Heart right ventricle (tissue), 16 donors: ENCODE measurements at regions of chr17 and their contacts with region 1.

Region 1: GRCh38 chr17:79769596-79770520 is 8.1 kb upstream of the CBX2 start:
- DNase-seq: no peak
- ATAC-seq: no peak
- H3K4me3 ChIP-seq: no peak overlapping the region
- H3K27ac ChIP-seq: no peak overlapping the region
- H3K4me1 ChIP-seq: no peaks in the 10 kb centered on the region
- H3K27me3 ChIP-seq: peaks cover 0 to 56% (median 34%) of the 10 kb centered on the region in 7 donors
- CTCF ChIP-seq: no peak

Region 2: GRCh38 chr17:79808763-79809529 is 39.1 kb after region 1 on chr17:
- intact Hi-C with region 1: no loop called
- DNase-seq: no peak
- ATAC-seq: peak in 6 of 8 donors; percentile 12 to 63 (median 46)
- H3K4me3 ChIP-seq: no peak overlapping the region
- H3K27ac ChIP-seq: no peak overlapping the region
- H3K4me1 ChIP-seq: peaks cover 19 to 53% (median 36%) of the 10 kb centered on the region in 9 donors
- H3K27me3 ChIP-seq: peaks cover 61 to 96% (median 93%) of the 10 kb centered on the region in 7 donors
- CTCF ChIP-seq: peak in 8 of 9 donors; percentile 8 to 47 (median 35)

Region 3: DNA sequence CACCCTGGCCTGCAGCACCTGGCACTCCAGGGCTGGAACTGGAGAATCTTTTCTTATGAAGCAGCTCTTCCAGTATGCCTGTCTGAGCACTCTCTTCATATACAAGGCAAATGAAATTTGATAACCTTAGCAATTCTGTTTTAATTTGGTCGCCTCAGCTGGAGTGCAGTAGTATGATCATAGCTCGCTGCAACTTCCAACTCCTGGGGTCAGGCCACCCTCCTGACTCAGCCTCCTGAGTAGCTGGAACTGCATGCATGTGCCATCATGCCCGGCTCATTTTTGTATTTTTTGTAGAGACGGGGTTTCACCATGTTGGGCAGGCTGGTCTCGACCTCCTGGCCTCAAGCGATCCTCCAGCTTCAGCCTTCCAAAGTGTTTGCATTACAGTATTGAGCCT is 1081.0 kb after region 1 on chr17:
- intact Hi-C with region 1: loop called in 1 of 10 experiments (anchors 5 kb)
- DNase-seq: no peak
- ATAC-seq: no peak
- H3K4me3 ChIP-seq: no peak overlapping the region
- H3K27ac ChIP-seq: no peak overlapping the region
- H3K4me1 ChIP-seq: peaks cover 0 to 12% (median 0%) of the 10 kb centered on the region in 9 donors
- H3K27me3 ChIP-seq: no peaks in the 10 kb centered on the region
- CTCF ChIP-seq: no peak